HEK293 (cell line): ENCODE measurements at regions of chr2 and their contacts with region 1.

Region 1: GRCh38 chr2:148020111-148021058 is at the start of gene ORC4:
- H3K4me3 ChIP-seq: peak within 1 kb of the TSS; percentile 72
- H3K27ac ChIP-seq: peak within 1 kb of the TSS; percentile 88
- H3K4me1 ChIP-seq: peaks cover 10% of the 10 kb centered on the region; the same call in 1 of the 2 replicates
- CTCF ChIP-seq: peak; percentile 100

Region 2: GRCh38 chr2:147696448-147696847 is 323.9 kb before region 1 on chr2:
- CTCF ChIA-PET with region 1: no interaction called
- POLR2A ChIA-PET with region 1: no interaction called
- H3K4me3 ChIP-seq: no peak overlapping the region
- H3K27ac ChIP-seq: no peak overlapping the region
- H3K4me1 ChIP-seq: no peaks in the 10 kb centered on the region
- CTCF ChIP-seq: no peak

Region 3: DNA sequence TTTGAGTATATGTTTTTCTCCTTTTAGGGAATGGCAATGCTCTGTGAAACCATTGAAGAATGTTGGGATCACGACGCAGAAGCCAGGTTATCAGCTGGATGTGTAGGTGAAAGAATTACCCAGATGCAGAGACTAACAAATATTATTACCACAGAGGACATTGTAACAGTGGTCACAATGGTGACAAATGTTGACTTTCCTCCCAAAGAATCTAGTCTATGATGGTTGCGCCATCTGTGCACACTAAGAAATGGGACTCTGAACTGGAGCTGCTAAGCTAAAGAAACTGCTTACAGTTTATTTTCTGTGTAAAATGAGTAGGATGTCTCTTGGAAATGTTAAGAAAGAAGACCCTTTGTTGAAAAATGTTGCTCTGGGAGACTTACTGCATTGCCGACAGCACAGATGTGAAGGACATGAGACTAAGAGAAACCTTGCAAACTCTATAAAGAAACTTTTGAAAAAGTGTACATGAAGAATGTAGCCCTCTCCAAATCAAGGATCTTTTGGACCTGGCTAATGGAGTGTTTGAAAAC is 93.3 kb before region 1 on chr2:
- CTCF ChIA-PET with region 1: no interaction called
- POLR2A ChIA-PET with region 1: no interaction called
- H3K4me3 ChIP-seq: no peak overlapping the region
- H3K27ac ChIP-seq: no peak overlapping the region
- H3K4me1 ChIP-seq: no peaks in the 10 kb centered on the region
- CTCF ChIP-seq: no peak

Region 4: GRCh38 chr2:148031152-148031551 is 10.8 kb after region 1 on chr2:
- CTCF ChIA-PET with region 1: interaction called, 3 read pairs
- POLR2A ChIA-PET with region 1: interaction called, 13 read pairs
- H3K4me3 ChIP-seq: no peak overlapping the region
- H3K27ac ChIP-seq: no peak overlapping the region
- H3K4me1 ChIP-seq: peaks cover 21% of the 10 kb centered on the region
- CTCF ChIP-seq: no peak

Region 5: DNA sequence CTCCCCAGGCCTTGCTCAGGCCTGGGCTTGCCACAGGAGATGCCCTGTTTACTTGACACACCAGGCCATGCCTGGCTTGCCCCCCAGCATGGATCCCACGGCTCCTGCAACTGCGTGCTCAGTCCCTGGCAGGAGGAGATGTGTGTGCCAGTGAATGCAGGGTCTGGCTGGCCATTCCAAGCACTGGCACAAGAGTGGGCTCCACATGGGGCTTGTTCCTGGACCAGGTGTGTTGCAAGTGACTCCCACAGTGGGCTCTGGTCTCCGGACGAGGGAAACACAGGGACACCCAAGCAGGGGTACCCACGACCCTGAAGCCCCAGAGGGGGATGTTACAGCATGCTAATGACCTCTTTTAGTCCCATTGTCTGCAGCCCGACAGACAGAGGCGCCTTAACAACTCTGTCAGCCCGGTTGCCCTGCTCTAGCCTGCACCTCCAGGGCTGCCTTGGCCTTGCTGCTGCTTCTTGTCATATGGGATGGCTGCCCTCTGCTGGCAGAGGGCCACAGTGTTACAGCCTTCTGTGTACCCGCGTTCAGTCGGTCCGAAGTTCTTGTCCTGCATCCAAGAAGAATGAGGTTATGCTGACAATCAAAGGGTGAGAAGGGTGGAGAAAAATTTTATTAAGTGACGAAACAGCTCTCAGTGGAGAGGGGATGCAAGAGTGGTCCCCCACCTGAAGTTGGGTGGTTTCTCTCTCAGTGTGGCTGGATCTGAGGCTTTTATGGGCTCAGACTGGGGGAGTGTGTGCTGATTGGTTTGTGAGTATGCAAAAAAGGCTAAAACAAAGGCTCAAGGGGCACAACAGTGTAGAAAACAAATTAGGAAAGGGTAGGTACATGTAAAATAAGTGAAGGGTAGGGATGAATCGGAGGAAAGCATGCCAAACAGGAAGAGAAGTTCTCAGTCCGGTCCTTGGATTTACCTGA is 181.0 kb after region 1 on chr2:
- CTCF ChIA-PET with region 1: no interaction called
- POLR2A ChIA-PET with region 1: no interaction called
- H3K4me3 ChIP-seq: no peak overlapping the region
- H3K27ac ChIP-seq: no peak overlapping the region
- H3K4me1 ChIP-seq: no peaks in the 10 kb centered on the region
- CTCF ChIP-seq: no peak